ENCODE measurements at regions of chr16 and their contacts with region 1.

Region 1: DNA sequence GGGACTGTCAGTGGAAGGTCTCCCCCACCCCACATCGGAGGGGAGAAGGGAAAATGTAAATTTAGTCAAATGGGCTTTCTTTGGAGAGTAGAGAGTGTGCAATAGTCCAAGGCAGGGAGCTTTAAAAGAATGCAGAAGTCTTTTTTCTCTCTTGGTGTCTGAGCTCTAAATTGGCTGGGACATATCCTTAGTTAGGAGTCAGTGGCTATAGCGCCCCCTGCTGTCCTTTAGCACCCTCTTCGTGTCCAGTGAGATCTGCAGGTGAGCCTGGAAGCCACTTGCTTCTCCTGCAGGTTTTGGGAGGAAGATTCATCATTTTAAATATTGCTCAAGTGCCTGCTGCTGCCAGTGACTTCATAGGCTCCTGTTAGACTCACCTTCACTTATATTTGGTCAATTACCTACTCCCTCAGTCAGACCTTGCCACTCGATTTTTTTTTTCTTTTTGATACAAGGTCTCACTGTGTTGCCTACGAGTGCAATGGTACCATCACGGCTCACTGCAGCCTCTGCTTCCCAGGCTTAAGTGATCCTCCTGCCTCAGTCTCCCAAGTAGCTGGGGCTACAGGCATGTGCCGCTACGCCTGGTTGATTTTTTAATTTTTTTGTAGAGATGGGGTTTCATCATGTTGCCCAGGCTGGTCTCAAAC is 174.8 kb downstream of the PRKCB start:
- DNase-seq: peak; percentile 90
- ATAC-seq: peak; percentile 54
- H3K4me3 Mint-ChIP-seq: no peak overlapping the region
- H3K27ac Mint-ChIP-seq: no peak overlapping the region
- H3K4me1 Mint-ChIP-seq: peaks cover 46% of the 10 kb centered on the region
- H3K27me3 Mint-ChIP-seq: no peaks in the 10 kb centered on the region

Region 2: DNA sequence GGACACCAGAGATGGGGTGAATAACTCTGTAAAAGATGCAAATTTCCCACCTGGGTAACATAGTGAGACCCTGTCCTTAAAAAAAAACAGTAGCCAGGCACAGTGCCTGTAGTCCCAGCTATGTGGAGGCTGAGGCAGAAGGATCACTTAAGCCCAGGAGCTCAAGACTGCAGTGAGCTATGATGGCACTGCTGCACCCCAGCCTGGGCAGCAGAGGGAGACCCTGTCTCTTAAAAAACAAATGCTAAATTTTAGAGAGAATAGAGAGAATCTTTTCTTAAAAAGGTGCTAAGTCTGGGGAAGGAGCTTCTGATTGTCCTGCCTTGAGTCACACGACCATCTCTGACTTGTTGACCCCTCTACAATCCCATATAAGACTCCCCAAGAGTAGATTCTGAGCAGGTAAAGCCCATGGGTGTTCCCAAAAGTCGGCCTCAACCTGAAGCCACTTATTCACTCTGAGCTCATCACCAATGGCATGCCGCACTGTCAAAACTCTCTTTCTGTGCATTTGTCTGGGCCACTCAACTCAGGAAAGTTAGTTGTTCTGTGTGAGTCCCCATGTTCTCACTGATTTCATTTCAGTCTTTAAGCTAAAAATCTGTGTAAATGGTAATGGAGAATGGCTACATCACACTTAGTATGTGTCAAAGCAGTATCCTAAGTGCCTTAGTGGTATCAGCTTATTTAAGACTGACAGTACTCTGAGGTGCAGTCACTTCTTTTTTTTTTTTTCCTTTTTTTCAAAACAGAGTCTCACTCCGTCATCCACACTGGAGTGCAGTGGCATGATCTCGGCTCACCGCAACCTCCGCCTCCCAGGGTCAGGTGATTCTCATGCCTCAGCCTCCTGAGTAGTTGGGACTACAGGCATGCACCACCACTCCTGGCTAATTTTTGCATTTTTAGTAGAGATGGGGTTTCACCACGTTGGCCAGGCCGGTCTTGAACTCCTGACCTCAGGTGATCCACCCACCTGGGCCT is 133.2 kb before region 1 on chr16:
- CTCF ChIA-PET with region 1: interaction called, 8 read pairs
- POLR2A ChIA-PET with region 1: interaction called, 3 read pairs
- intact Hi-C with region 1: loop called (anchors 1 to 2 kb)
- DNase-seq: peak; percentile 52
- ATAC-seq: peak; percentile 73
- H3K4me3 Mint-ChIP-seq: no peak overlapping the region
- H3K27ac Mint-ChIP-seq: peak overlapping the region; percentile 55
- H3K4me1 Mint-ChIP-seq: peaks cover 75% of the 10 kb centered on the region
- H3K27me3 Mint-ChIP-seq: no peaks in the 10 kb centered on the region

Region 3: GRCh38 chr16:23966597-23967394 is 43.8 kb before region 1 on chr16:
- CTCF ChIA-PET with region 1: interaction called, 12 read pairs
- POLR2A ChIA-PET with region 1: no interaction called
- intact Hi-C with region 1: no loop called
- DNase-seq: no peak
- ATAC-seq: no peak
- H3K4me3 Mint-ChIP-seq: no peak overlapping the region
- H3K27ac Mint-ChIP-seq: no peak overlapping the region
- H3K4me1 Mint-ChIP-seq: peaks cover 56% of the 10 kb centered on the region
- H3K27me3 Mint-ChIP-seq: no peaks in the 10 kb centered on the region

Region 4: DNA sequence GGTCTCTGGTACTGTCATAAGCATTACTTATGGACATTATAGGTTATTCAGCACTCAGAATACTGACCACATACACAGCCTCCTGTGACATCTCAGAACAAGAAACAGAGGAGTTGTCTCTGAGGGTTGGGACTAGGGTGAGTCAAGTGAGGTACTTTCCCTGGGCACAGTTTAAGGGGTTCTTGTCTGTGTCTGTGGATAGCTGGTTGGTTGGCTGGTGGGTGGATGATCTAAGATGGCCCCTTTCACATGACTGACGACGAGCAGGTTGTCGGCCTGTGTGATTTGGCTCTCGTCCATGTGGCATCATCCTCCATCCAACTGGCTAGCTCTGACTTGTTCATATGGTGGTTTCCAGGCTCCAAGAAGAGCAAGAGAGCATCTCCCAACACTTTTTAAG is 10.9 kb before region 1 on chr16:
- CTCF ChIA-PET with region 1: interaction called, 16 read pairs
- POLR2A ChIA-PET with region 1: interaction called, 3 read pairs
- intact Hi-C with region 1: no loop called
- DNase-seq: peak; percentile 85
- ATAC-seq: peak; percentile 98
- H3K4me3 Mint-ChIP-seq: no peak overlapping the region
- H3K27ac Mint-ChIP-seq: peak overlapping the region; percentile 44
- H3K4me1 Mint-ChIP-seq: peaks cover 20% of the 10 kb centered on the region
- H3K27me3 Mint-ChIP-seq: no peaks in the 10 kb centered on the region

Region 5: GRCh38 chr16:24036614-24037013 is 26.0 kb after region 1 on chr16:
- CTCF ChIA-PET with region 1: interaction called, 24 read pairs
- POLR2A ChIA-PET with region 1: no interaction called
- intact Hi-C with region 1: loop called (anchors 2 kb)
- DNase-seq: peak; percentile 47
- ATAC-seq: peak; percentile 60
- H3K4me3 Mint-ChIP-seq: no peak overlapping the region
- H3K27ac Mint-ChIP-seq: no peak overlapping the region
- H3K4me1 Mint-ChIP-seq: peaks cover 29% of the 10 kb centered on the region
- H3K27me3 Mint-ChIP-seq: no peaks in the 10 kb centered on the region

Measured in activated CD4-positive, alpha-beta T cell treated with anti-CD3 and anti-CD28 coated beads for 36 hours (primary cell).